ENCODE measurements at regions of chr6 and their contacts with region 1.

Region 1: GRCh38 chr6:136792410-136793262 is at the start of gene MAP3K5:
- DNase-seq: peak; percentile 89 to 97 (median 96)
- ATAC-seq: peak; percentile 79
- H3K4me3 ChIP-seq: peak within 1 kb of the TSS; percentile 74
- H3K4me3 Mint-ChIP-seq: peak within 1 kb of the TSS; percentile 97
- H3K27ac ChIP-seq: peak within 1 kb of the TSS; percentile 88 to 98
- H3K27ac Mint-ChIP-seq: peak within 1 kb of the TSS; percentile 99
- H3K4me1 ChIP-seq: peaks cover 22% of the 10 kb centered on the region
- H3K4me1 Mint-ChIP-seq: peaks cover 40% of the 10 kb centered on the region
- H3K27me3 ChIP-seq: no peaks in the 10 kb centered on the region
- H3K27me3 Mint-ChIP-seq: no peaks in the 10 kb centered on the region
- CTCF ChIP-seq: peak; percentile 93
- total RNA-seq, gene MAP3K5: 12.9 to 14.1 TPM

Region 2: DNA sequence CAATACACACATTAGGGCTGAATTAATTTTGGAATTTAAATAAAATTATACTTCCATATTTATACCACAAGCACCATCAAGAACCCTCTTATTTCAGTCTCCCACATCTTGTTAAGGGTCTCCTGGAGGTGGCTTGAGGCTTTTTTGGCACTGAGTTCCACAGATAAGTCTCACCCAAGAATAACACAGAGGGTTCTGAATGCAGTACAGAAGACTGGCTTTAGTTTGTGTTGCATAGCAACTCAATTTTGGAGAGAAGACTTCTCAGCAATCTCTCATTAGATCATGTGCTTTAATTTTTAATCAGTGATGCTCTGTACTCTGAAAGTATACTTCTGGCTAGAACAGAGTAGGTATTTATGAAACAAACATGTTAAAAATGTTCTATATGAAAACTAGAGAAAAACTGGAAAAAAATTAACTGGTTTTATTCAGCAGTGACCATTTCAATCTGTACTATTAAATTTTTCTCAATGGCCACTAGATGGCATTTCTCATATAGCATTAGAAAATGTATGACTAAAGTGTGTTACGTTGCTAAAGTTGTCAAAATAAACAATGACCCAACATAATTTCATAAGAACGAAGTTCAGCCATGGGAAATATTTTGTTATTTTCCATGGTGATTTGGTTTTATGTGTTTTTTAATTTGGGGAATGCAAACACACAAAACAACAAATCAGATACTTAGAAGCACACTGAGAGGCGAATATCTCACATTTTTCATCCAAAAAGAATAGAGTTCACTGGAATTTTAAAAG is 209.7 kb before region 1 on chr6:
- CTCF ChIA-PET with region 1: interaction called, 3 read pairs
- POLR2A ChIA-PET with region 1: no interaction called
- intact Hi-C with region 1: loop called in 1 of 2 experiments (anchors 2 kb)
- DNase-seq: peak in 3 of 14 experiments; percentile 19 to 39 (median 21)
- ATAC-seq: no peak
- H3K4me3 ChIP-seq: no peak overlapping the region
- H3K4me3 Mint-ChIP-seq: no peak overlapping the region
- H3K27ac ChIP-seq: no peak overlapping the region
- H3K27ac Mint-ChIP-seq: no peak overlapping the region
- H3K4me1 ChIP-seq: no peaks in the 10 kb centered on the region
- H3K4me1 Mint-ChIP-seq: no peaks in the 10 kb centered on the region
- H3K27me3 ChIP-seq: no peaks in the 10 kb centered on the region
- H3K27me3 Mint-ChIP-seq: no peaks in the 10 kb centered on the region
- CTCF ChIP-seq: peak; percentile 51

Region 3: GRCh38 chr6:136652656-136653055 is 140.0 kb before region 1 on chr6:
- CTCF ChIA-PET with region 1: interaction called, 224 read pairs
- POLR2A ChIA-PET with region 1: interaction called, 147 read pairs
- intact Hi-C with region 1: no loop called
- DNase-seq: no peak
- ATAC-seq: no peak
- H3K4me3 ChIP-seq: no peak overlapping the region
- H3K4me3 Mint-ChIP-seq: no peak overlapping the region
- H3K27ac ChIP-seq: no peak overlapping the region
- H3K27ac Mint-ChIP-seq: no peak overlapping the region
- H3K4me1 ChIP-seq: peaks cover 3% of the 10 kb centered on the region
- H3K4me1 Mint-ChIP-seq: no peaks in the 10 kb centered on the region
- H3K27me3 ChIP-seq: no peaks in the 10 kb centered on the region
- H3K27me3 Mint-ChIP-seq: no peaks in the 10 kb centered on the region
- CTCF ChIP-seq: no peak

Region 4: DNA sequence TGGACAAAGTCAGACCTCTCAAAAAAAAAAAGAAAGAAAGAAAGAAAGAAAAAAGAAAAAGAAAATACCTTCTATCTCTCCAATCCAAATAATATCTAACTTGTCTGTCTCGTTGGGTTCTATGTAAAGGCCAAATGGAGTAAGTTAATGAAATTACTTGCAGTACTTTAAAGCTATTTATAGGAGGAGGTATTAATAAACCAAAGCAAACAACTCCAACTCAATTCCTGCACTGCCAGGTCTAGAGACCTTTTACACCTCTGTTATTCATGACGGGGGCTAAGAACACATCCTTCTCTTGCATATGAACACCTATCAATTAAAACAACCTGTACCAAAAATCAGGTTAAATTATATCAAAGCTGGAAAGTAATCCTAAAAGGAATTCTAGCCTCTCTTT is 81.0 kb before region 1 on chr6:
- CTCF ChIA-PET with region 1: interaction called, 39 read pairs
- POLR2A ChIA-PET with region 1: interaction called, 6 read pairs
- intact Hi-C with region 1: loop called in 1 of 2 experiments (anchors 10 kb)
- DNase-seq: no peak
- ATAC-seq: no peak
- H3K4me3 ChIP-seq: no peak overlapping the region
- H3K4me3 Mint-ChIP-seq: no peak overlapping the region
- H3K27ac ChIP-seq: no peak overlapping the region
- H3K27ac Mint-ChIP-seq: no peak overlapping the region
- H3K4me1 ChIP-seq: no peaks in the 10 kb centered on the region
- H3K4me1 Mint-ChIP-seq: peaks cover 6% of the 10 kb centered on the region
- H3K27me3 ChIP-seq: no peaks in the 10 kb centered on the region
- H3K27me3 Mint-ChIP-seq: no peaks in the 10 kb centered on the region
- CTCF ChIP-seq: no peak

Region 5: DNA sequence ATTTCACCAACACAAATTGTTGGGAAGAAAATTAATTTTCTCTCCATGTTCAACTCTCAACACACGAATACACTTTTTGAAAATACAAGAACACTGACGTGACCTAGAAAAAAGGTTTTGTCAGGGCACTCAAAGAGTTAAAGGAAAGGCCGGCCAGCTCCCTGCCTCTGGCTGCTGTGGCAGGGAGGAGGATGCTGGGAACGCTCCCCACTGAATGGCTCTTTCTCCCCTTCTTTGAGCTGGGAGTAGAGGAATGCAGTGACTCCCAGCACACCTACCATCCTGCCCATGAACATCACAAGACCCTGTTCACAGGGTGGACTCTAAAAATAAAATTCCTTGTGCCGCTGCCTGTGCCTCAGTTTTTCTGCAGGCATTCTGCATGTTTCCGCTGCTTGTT is 47.3 kb before region 1 on chr6:
- CTCF ChIA-PET with region 1: interaction called, 52 read pairs
- POLR2A ChIA-PET with region 1: interaction called, 110 read pairs
- intact Hi-C with region 1: loop called in 1 of 2 experiments (anchors 2 kb)
- DNase-seq: no peak
- ATAC-seq: no peak
- H3K4me3 ChIP-seq: no peak overlapping the region
- H3K4me3 Mint-ChIP-seq: no peak overlapping the region
- H3K27ac ChIP-seq: no peak overlapping the region
- H3K27ac Mint-ChIP-seq: no peak overlapping the region
- H3K4me1 ChIP-seq: peaks cover 18% of the 10 kb centered on the region
- H3K4me1 Mint-ChIP-seq: peaks cover 52% of the 10 kb centered on the region
- H3K27me3 ChIP-seq: no peaks in the 10 kb centered on the region
- H3K27me3 Mint-ChIP-seq: no peaks in the 10 kb centered on the region
- CTCF ChIP-seq: no peak

Region 6: GRCh38 chr6:136767570-136768307 is 24.9 kb before region 1 on chr6:
- CTCF ChIA-PET with region 1: interaction called, 57 read pairs
- POLR2A ChIA-PET with region 1: interaction called, 151 read pairs
- intact Hi-C with region 1: loop called in 1 of 2 experiments (anchors 2 kb)
- DNase-seq: no peak
- ATAC-seq: no peak
- H3K4me3 ChIP-seq: no peak overlapping the region
- H3K4me3 Mint-ChIP-seq: peak overlapping the region; percentile 44
- H3K27ac ChIP-seq: peak overlapping the region in 1 of 2 donors; percentile 36
- H3K27ac Mint-ChIP-seq: peak overlapping the region; percentile 14
- H3K4me1 ChIP-seq: peaks cover 68% of the 10 kb centered on the region
- H3K4me1 Mint-ChIP-seq: peaks cover 76% of the 10 kb centered on the region
- H3K27me3 ChIP-seq: no peaks in the 10 kb centered on the region
- H3K27me3 Mint-ChIP-seq: no peaks in the 10 kb centered on the region
- CTCF ChIP-seq: no peak